Activated CD4-positive, alpha-beta T cell treated with anti-CD3 and anti-CD28 coated beads for 36 hours (primary cell): ENCODE measurements at regions of chrX and their contacts with region 1.

Region 1: DNA sequence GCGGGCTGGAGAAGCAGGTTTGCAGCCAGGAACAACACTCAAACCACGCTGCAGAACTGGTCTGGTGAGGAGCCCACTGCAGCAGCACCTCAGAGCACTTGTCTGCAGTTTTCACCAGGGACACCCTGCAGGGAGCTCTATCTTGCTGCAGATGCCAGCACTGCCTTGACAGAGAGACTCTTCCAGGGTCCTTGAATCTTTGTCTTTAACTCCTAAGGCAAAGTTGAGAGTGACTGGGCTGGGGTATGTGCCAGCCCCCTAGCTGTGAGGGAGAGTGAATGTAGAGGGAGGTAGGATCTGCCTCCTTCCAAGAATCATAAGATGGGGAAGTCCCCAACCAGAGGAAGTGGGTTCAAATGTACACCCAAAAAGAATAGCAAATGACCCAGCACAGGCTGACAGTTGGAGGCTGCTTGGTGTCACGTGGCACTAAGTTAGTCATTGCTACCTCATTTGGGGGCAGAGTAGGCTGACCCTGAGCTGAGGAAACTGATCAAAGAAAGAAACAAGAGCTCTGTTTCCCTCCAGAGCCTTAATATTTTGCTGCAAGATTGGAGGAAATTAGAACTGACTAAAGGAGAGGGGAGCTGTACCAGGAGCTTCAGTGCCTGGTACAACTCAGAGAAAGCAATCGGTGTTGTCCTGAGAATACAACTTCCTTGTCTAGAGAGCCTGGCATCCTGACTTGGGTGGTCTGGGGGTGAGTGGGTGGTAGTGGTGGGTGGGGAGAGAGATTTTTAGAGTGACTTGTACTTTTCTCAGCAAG is 28.2 kb upstream of the HUWE1 start:
- DNase-seq: peak; percentile 77
- ATAC-seq: peak; percentile 74
- H3K4me3 Mint-ChIP-seq: peak overlapping the region; percentile 86
- H3K27ac Mint-ChIP-seq: peak overlapping the region; percentile 96
- H3K4me1 Mint-ChIP-seq: peaks cover 37% of the 10 kb centered on the region
- H3K27me3 Mint-ChIP-seq: no peaks in the 10 kb centered on the region

Region 2: DNA sequence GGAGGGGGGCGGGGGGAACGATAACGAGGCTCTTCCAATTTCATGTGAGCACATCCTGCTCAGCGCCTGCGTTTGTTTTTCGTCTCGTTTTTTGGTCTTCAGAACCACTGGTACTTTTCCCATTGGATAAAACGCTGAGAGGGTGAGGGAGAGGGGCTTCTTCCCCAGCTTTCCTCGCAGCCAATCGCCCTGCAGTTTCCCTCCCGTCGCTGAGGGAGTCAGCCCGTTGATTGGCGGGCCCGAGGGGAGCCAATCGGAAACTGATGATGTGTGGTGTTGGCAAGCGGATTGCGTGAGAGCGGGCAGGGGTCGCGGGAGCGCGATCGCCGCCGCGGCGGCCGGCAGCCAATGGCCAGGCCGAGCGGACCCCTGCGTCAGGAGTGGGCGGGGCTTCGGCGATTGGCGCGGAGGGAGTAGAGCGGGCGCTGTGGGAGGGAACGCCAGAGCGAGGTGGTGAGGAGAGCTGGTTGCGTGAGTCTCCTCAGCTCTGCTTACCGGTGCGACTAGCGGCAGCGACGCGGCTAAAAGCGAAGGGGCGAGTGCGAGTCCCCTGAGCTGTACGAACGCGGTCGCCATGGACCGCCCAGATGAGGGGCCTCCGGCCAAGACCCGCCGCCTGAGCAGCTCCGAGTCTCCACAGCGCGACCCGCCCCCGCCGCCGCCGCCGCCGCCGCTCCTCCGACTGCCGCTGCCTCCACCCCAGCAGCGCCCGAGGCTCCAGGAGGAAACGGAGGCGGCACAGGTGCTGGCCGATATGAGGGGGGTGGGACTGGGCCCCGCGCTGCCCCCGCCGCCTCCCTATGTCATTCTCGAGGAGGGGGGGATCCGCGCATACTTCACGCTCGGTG is 632.6 kb before region 1 on chrX and contains the start of gene TSPYL2:
- CTCF ChIA-PET with region 1: no interaction called
- POLR2A ChIA-PET with region 1: no interaction called
- intact Hi-C with region 1: loop called in 1 of 2 experiments (anchors 10 kb)
- DNase-seq: peak; percentile 96
- ATAC-seq: peak; percentile 91
- H3K4me3 Mint-ChIP-seq: peak within 1 kb of the TSS; percentile 91
- H3K27ac Mint-ChIP-seq: peak within 1 kb of the TSS; percentile 95
- H3K4me1 Mint-ChIP-seq: peaks cover 46% of the 10 kb centered on the region
- H3K27me3 Mint-ChIP-seq: no peaks in the 10 kb centered on the region
- total RNA-seq, gene TSPYL2: 56.7 to 73.3 TPM

Region 3: DNA sequence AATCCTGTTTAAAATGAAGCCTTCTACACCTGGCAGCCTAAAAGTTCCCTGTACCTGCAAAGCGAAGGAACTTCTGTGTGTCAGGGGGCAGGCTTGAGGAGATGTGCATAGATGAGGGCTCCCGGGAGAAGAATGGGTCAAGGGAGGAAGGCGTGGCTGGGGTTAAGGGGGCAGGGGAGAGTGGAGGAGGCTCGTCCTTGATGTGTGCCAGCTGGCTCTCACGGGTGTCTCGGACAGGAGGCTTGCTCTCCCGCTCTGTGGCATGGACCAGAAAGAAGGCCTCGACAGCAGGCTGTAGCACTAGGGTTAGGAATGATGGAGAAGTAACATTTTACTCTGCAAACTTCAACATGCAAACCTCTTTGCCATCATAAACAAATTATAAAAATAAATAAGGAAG is 176.0 kb before region 1 on chrX:
- CTCF ChIA-PET with region 1: no interaction called
- POLR2A ChIA-PET with region 1: no interaction called
- intact Hi-C with region 1: no loop called
- DNase-seq: no peak
- ATAC-seq: no peak
- H3K4me3 Mint-ChIP-seq: no peak overlapping the region
- H3K27ac Mint-ChIP-seq: no peak overlapping the region
- H3K4me1 Mint-ChIP-seq: no peaks in the 10 kb centered on the region
- H3K27me3 Mint-ChIP-seq: no peaks in the 10 kb centered on the region

Region 4: GRCh38 chrX:53732797-53733196 is 18.0 kb after region 1 on chrX:
- CTCF ChIA-PET with region 1: interaction called, 5 read pairs
- POLR2A ChIA-PET with region 1: interaction called, 9 read pairs
- intact Hi-C with region 1: loop called (anchors 1 kb)
- DNase-seq: peak; percentile 55
- ATAC-seq: peak; percentile 89
- H3K4me3 Mint-ChIP-seq: peak overlapping the region; percentile 70
- H3K27ac Mint-ChIP-seq: peak overlapping the region; percentile 97
- H3K4me1 Mint-ChIP-seq: peaks cover 62% of the 10 kb centered on the region
- H3K27me3 Mint-ChIP-seq: no peaks in the 10 kb centered on the region

Region 5: DNA sequence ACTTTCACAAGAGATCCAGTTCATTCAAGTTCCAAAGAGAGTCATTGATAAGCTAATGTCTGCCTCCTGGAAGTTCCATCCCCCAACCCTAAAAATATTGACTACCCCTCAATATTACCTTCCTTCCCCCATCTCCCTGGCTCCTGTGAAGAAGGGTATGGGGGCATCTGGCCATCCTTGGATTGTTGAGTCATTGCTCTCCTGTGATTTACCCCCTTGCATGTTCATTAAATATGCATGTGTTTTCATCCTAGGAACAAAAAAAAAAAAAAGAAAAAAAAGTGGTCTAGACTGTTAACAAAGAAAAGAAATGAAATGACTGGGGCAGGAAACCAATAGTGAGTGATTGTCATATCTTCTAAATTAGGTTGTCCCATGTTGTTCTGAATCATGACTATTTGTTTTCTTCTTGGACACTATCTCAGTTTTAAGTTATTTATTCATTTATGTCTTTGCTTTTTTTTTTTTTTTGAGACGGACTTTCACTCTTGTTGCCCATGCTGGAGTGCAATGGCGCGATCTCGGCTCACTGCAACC is 23.7 kb after region 1 on chrX:
- CTCF ChIA-PET with region 1: interaction called, 5 read pairs
- POLR2A ChIA-PET with region 1: interaction called, 9 read pairs
- intact Hi-C with region 1: loop called in 1 of 2 experiments (anchors 1 kb)
- DNase-seq: no peak
- ATAC-seq: peak; percentile 59
- H3K4me3 Mint-ChIP-seq: no peak overlapping the region
- H3K27ac Mint-ChIP-seq: peak overlapping the region; percentile 71
- H3K4me1 Mint-ChIP-seq: peaks cover 59% of the 10 kb centered on the region
- H3K27me3 Mint-ChIP-seq: no peaks in the 10 kb centered on the region

Region 6: GRCh38 chrX:53831662-53832635 is 117.2 kb after region 1 on chrX:
- CTCF ChIA-PET with region 1: interaction called, 3 read pairs
- POLR2A ChIA-PET with region 1: no interaction called
- intact Hi-C with region 1: loop called (anchors 1 to 10 kb)
- DNase-seq: peak; percentile 61
- ATAC-seq: peak; percentile 92
- H3K4me3 Mint-ChIP-seq: peak overlapping the region; percentile 37
- H3K27ac Mint-ChIP-seq: peak overlapping the region; percentile 21
- H3K4me1 Mint-ChIP-seq: peaks cover 31% of the 10 kb centered on the region
- H3K27me3 Mint-ChIP-seq: no peaks in the 10 kb centered on the region